Left colon (tissue), 2 donors: ENCODE measurements at regions of chr3 and their contacts with region 1.

Region 1: GRCh38 chr3:66276705-66277274 is 56.0 kb downstream of the SLC25A26 start:
- DNase-seq: peak; percentile 31 to 63
- ATAC-seq: peak; percentile 75

Region 2: DNA sequence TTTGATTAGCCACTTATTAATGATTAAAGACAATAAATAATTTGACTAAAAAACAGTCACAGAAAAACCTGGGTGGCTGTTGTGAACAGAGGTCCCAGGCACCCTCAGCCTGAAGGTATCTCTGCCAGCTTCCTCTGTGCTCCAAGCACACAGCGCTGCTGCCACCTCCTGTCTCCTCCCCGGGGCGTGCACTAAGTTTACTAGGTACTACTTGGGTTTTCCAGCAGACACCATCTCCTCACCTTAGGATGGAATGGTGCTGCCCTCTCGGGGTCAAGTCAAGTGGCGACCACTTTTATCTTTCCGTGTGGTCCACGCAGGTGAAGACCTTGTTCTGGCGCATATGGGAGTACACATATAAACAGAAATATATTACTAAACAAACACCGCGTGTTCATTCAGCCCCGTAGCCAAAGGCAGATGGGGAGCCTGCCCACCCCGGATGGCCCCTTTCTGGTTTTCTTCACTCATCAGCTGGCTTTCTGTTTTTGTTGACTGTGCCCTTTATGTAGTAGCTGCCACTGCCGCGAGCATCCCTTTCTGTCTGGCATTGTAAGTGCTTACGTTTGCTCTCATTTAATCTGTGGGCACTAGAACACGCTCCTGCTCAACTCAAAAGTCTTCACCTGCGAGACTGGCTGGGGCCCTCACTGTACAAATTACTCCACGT is 96.0 kb after region 1 on chr3:
- intact Hi-C with region 1: loop called in 1 of 2 experiments (anchors 10 kb)
- DNase-seq: peak; percentile 60 to 68
- ATAC-seq: peak; percentile 79

Region 3: GRCh38 chr3:66816090-66816761 is 539.4 kb after region 1 on chr3:
- intact Hi-C with region 1: loop called in 1 of 2 experiments (anchors 5 kb)
- DNase-seq: no peak
- ATAC-seq: peak; percentile 76